Mammary epithelial cell (primary cell): ENCODE measurements at regions of chr9 and their contacts with region 1.

Region 1: DNA sequence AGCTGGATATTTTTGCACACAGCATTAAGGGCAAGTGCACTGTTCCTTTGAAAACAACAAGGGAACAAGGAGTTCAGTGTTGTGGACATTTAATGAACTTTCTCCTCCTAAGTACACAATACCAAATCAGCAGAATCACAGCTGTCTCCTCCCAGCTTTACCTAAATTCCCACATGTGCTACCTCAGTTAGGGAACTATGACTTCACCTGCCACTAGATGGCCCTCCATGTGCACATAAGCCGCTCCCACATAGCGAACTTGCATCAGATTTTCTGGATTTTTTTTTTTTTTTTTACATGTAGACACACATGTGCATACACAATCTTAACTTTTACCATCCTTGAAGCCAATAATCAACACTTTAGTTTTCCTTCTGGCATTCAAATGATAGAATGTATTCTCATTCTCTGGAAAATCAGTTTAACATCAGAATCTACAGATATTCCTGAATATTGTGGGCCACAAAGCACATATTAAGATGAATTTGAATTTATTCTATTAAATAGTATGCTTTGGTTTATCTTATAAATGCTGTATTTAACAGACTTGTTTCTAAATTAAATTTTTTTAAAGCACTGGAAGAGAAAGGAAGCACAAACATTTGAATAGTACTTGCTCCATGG is 123.6 kb downstream of the PALM2AKAP2 start:
- DNase-seq: peak; percentile 53
- H3K4me3 ChIP-seq: no peak overlapping the region
- H3K27ac ChIP-seq: no peak overlapping the region
- H3K4me1 ChIP-seq: no peaks in the 10 kb centered on the region
- H3K27me3 ChIP-seq: no peaks in the 10 kb centered on the region
- CTCF ChIP-seq: peak; percentile 88 to 93

Region 2: GRCh38 chr9:109926421-109926869 is 22.8 kb after region 1 on chr9:
- CTCF ChIA-PET with region 1: no interaction called
- dilution Hi-C with region 1: no loop called
- in situ Hi-C with region 1: no loop called
- intact Hi-C with region 1: no loop called
- DNase-seq: no peak
- H3K4me3 ChIP-seq: no peak overlapping the region
- H3K27ac ChIP-seq: no peak overlapping the region
- H3K4me1 ChIP-seq: no peaks in the 10 kb centered on the region
- H3K27me3 ChIP-seq: no peaks in the 10 kb centered on the region
- CTCF ChIP-seq: no peak

Region 3: DNA sequence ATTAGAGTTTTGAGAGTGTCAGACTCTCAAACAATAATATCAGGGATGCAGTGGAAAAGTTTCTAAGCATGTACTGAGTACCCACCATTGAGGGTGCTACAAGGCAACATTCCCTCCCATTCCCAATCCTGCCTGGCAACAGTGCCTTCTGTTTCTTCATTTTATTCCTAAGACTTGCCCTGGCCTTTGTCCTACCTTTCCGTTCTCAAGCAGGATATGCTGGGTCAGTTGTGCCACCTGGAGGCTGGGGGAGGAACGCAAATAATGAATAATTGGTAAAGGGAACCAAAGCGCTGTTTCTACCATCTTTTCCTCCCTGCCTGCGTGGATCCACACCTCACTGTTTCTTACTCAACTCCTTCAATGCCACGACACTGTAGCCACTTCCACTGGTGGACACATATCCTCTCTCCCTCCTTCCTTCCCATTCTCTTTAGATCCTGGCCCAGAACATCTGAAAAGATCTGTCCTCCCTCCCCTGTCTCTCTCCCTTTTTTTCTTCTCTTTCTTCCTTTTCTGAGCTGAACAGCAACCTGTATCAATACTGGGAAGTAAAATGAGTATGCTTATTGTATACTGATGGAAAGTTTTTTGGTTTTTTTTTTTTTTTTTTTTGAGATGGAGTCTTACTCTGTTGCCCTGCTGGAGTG is 154.8 kb after region 1 on chr9:
- CTCF ChIA-PET with region 1: no interaction called
- dilution Hi-C with region 1: loop called (anchors 5 kb)
- in situ Hi-C with region 1: loop called (anchors 5 to 10 kb)
- intact Hi-C with region 1: loop called (anchors 1 kb)
- DNase-seq: peak; percentile 57
- H3K4me3 ChIP-seq: no peak overlapping the region
- H3K27ac ChIP-seq: no peak overlapping the region
- H3K4me1 ChIP-seq: peaks cover 5% of the 10 kb centered on the region
- H3K27me3 ChIP-seq: no peaks in the 10 kb centered on the region
- CTCF ChIP-seq: peak; percentile 61 to 79

Region 4: GRCh38 chr9:110069326-110070248 is 166.0 kb after region 1 on chr9:
- CTCF ChIA-PET with region 1: no interaction called
- dilution Hi-C with region 1: loop called (anchors 5 kb)
- in situ Hi-C with region 1: no loop called
- intact Hi-C with region 1: no loop called
- DNase-seq: peak; percentile 17
- H3K4me3 ChIP-seq: no peak overlapping the region
- H3K27ac ChIP-seq: no peak overlapping the region
- H3K4me1 ChIP-seq: peaks cover 3% of the 10 kb centered on the region
- H3K27me3 ChIP-seq: no peaks in the 10 kb centered on the region
- CTCF ChIP-seq: no peak

Region 5: DNA sequence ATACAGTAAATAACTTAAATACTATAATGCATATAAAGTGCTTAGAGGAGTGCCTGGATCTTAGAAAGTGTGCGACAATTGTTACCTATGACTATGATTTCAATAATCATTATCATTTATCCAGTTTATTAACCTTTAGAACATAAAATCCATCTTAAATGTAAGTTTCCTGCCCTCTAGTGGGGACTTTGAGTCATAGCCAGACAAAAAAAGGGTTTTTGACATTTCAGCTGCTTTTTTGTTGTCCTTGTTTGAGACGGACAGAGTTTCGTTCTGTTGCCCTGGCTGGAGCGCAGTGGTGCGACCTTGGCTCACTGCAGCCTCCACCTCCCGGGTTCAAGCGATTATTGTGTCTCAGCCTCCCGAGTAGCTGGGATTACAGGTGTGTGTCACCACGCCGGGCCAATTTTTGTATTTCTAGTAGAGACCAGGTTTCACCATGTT is 314.1 kb after region 1 on chr9:
- CTCF ChIA-PET with region 1: no interaction called
- dilution Hi-C with region 1: no loop called
- in situ Hi-C with region 1: no loop called
- intact Hi-C with region 1: loop called (anchors 2 kb)
- DNase-seq: peak; percentile 22
- H3K4me3 ChIP-seq: no peak overlapping the region
- H3K27ac ChIP-seq: no peak overlapping the region
- H3K4me1 ChIP-seq: no peaks in the 10 kb centered on the region
- H3K27me3 ChIP-seq: no peaks in the 10 kb centered on the region
- CTCF ChIP-seq: peak; percentile 73